AG04450 (cell line): ENCODE measurements at regions of chr9 and their contacts with region 1.

Region 1: DNA sequence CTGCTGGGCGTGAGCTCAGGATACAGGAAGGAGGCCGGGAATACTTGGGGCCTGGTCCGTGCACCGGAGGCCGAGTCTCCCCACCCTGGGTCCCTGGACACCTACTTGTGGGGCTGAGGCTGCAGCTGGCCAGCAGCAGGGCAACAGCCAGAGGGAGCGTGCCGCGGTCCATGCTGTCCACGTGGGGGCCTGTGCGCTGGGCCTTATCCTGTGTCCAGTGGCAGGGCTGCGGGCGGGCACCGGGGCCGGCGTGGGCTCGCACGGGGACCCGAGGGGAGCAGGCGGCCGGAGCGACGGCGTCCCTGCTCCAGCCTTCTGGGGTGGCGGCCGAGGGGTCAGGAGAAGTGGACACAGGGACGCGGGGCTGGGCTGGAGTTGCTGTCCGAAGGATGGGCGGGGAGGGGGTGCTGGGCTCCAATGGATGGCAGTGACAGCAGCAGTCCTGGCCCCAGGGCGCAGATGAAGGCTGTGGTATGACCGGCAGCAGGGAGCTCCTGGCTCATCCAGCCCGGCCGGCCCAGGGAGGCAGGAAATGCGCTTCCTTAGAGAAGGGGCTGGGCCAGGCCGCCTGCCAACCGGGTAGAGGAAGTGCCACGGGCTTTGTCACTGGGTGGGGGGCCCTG is at the start of gene ENG:
- DNase-seq: no peak
- H3K4me3 ChIP-seq: peak within 1 kb of the TSS; percentile 79
- H3K27ac ChIP-seq: peak within 1 kb of the TSS; percentile 86
- H3K27me3 ChIP-seq: no peaks in the 10 kb centered on the region
- CTCF ChIP-seq: peak; percentile 21; the same call in 1 of the 2 replicates
- polyA plus RNA-seq, gene ENG: 17.2 and 34.2 TPM in 2 replicates

Region 2: GRCh38 chr9:127525401-127526187 is 328.7 kb before region 1 on chr9:
- CTCF ChIA-PET with region 1: no interaction called
- POLR2A ChIA-PET with region 1: no interaction called
- DNase-seq: no peak
- H3K4me3 ChIP-seq: no peak overlapping the region
- H3K27ac ChIP-seq: peak overlapping the region; percentile 21
- H3K27me3 ChIP-seq: no peaks in the 10 kb centered on the region
- CTCF ChIP-seq: peak; percentile 67

Region 3: GRCh38 chr9:127742435-127743088 is 111.7 kb before region 1 on chr9:
- CTCF ChIA-PET with region 1: no interaction called
- POLR2A ChIA-PET with region 1: interaction called, 11 read pairs
- DNase-seq: peak; percentile 23
- H3K4me3 ChIP-seq: peak overlapping the region; percentile 36
- H3K27ac ChIP-seq: no peak overlapping the region
- H3K27me3 ChIP-seq: peaks cover 10% of the 10 kb centered on the region
- CTCF ChIP-seq: no peak

Region 4: DNA sequence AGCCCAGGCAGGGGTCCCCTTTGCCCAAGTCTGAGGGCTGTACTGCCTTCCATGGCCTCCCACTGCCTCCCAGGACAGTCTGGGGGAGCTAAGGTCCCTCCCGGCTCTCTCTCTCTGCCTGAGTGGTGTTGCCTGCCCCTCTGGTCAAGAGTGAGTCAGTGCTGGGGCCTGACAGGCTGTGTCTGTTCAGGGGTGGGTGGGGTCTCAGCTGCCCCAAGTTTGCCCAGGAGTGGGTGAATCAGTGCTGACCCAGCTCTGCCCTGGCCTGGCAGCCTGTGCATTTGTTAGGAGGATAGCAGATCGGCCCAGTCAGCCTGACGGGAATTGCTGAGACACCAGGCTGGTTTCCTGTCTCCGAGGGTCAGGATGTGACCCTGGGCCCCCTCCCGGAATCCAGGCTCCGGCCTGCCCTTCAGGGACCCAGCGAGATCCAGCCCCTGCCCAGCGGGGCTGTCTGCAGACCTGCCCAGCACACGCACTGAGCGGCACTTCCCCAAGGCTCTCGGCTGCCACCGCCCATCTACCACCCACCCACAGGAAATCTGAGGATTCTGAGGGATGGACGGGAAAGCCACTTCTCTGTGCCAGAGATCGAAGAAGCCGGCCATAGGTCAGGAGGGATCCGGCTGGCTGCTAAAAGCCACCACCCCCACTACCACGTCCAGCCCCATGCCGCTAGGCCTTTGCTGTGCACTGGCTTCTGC is 15.8 kb before region 1 on chr9:
- CTCF ChIA-PET with region 1: no interaction called
- POLR2A ChIA-PET with region 1: interaction called, 10 read pairs
- DNase-seq: peak; percentile 65
- H3K4me3 ChIP-seq: peak overlapping the region; percentile 20
- H3K27ac ChIP-seq: peak overlapping the region; percentile 92
- H3K27me3 ChIP-seq: no peaks in the 10 kb centered on the region
- CTCF ChIP-seq: no peak

Region 5: GRCh38 chr9:127910613-127911205 is 56.4 kb after region 1 on chr9:
- CTCF ChIA-PET with region 1: no interaction called
- POLR2A ChIA-PET with region 1: no interaction called
- DNase-seq: no peak
- H3K4me3 ChIP-seq: no peak overlapping the region
- H3K27ac ChIP-seq: no peak overlapping the region
- H3K27me3 ChIP-seq: no peaks in the 10 kb centered on the region
- CTCF ChIP-seq: no peak